Endothelial cell of umbilical vein (primary cell): ENCODE measurements at regions of chr13 and their contacts with region 1.

Region 1: GRCh38 chr13:36251526-36251925 is 37.2 kb upstream of the SOHLH2 start:
- DNase-seq: no peak
- H3K4me3 ChIP-seq: no peak overlapping the region
- H3K27ac ChIP-seq: no peak overlapping the region
- H3K4me1 ChIP-seq: no peaks in the 10 kb centered on the region
- H3K27me3 ChIP-seq: no peaks in the 10 kb centered on the region
- CTCF ChIP-seq: no peak
- POLR2A ChIP-seq: no peak

Region 2: GRCh38 chr13:36261976-36262375 is 10.4 kb after region 1 on chr13:
- CTCF ChIA-PET with region 1: interaction called, 12 read pairs
- POLR2A ChIA-PET with region 1: no interaction called
- dilution Hi-C with region 1: no loop called
- intact Hi-C with region 1: no loop called
- DNase-seq: no peak
- H3K4me3 ChIP-seq: no peak overlapping the region
- H3K27ac ChIP-seq: no peak overlapping the region
- H3K4me1 ChIP-seq: no peaks in the 10 kb centered on the region
- H3K27me3 ChIP-seq: no peaks in the 10 kb centered on the region
- CTCF ChIP-seq: no peak
- POLR2A ChIP-seq: no peak

Region 3: GRCh38 chr13:36490055-36490454 is 238.5 kb after region 1 on chr13:
- CTCF ChIA-PET with region 1: no interaction called
- POLR2A ChIA-PET with region 1: no interaction called
- dilution Hi-C with region 1: no loop called
- intact Hi-C with region 1: no loop called
- DNase-seq: no peak
- H3K4me3 ChIP-seq: no peak overlapping the region
- H3K27ac ChIP-seq: no peak overlapping the region
- H3K4me1 ChIP-seq: no peaks in the 10 kb centered on the region
- H3K27me3 ChIP-seq: peaks cover 0 to 5% of the 10 kb centered on the region in 2 experiments
- CTCF ChIP-seq: no peak
- POLR2A ChIP-seq: no peak